Activated CD4-positive, alpha-beta T cell treated with anti-CD3 and anti-CD28 coated beads, Interleukin-2, amount 10 ng/mL, durations not matched to agents 24 days and 14 days (primary cell): ENCODE measurements at regions of chr7 and their contacts with region 1.

Region 1: GRCh38 chr7:106405697-106406141 is 120.9 kb upstream of the NAMPT start:
- DNase-seq: no peak
- H3K4me3 Mint-ChIP-seq: peak overlapping the region; percentile 16
- H3K27ac Mint-ChIP-seq: peak overlapping the region; percentile 49
- H3K4me1 Mint-ChIP-seq: peaks cover 18% of the 10 kb centered on the region
- H3K27me3 Mint-ChIP-seq: peaks cover 3% of the 10 kb centered on the region

Region 2: DNA sequence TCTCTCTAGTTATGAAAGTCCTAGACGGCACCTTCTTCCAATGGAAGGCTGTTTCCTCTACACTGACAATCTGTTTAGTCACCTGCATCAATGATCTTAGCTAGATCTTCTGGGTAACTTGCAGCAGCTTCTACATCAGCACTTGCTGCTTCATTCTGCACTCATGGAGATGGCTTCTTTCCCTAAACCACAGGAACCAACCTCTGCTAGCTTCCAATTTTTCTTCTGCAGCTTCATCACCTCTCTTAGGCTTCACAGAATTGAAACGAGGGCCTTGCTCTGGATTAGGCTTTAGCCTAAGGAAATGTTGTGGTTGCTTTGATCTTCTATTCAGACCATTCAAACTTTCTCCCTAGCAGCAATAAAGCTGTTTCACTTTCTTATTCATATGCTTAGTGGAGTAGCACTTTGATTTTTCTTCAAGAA is 145.6 kb before region 1 on chr7:
- intact Hi-C with region 1: loop called (anchors 1 kb)
- DNase-seq: peak; percentile 73
- H3K4me3 Mint-ChIP-seq: peak overlapping the region; percentile 62
- H3K27ac Mint-ChIP-seq: peak overlapping the region; percentile 78
- H3K4me1 Mint-ChIP-seq: peaks cover 37% of the 10 kb centered on the region
- H3K27me3 Mint-ChIP-seq: no peaks in the 10 kb centered on the region

Region 3: GRCh38 chr7:106367018-106367420 is 38.7 kb before region 1 on chr7:
- intact Hi-C with region 1: loop called (anchors 1 kb)
- DNase-seq: no peak
- H3K4me3 Mint-ChIP-seq: no peak overlapping the region
- H3K27ac Mint-ChIP-seq: peak overlapping the region; percentile 59
- H3K4me1 Mint-ChIP-seq: peaks cover 26% of the 10 kb centered on the region
- H3K27me3 Mint-ChIP-seq: peaks cover 14% of the 10 kb centered on the region

Region 4: DNA sequence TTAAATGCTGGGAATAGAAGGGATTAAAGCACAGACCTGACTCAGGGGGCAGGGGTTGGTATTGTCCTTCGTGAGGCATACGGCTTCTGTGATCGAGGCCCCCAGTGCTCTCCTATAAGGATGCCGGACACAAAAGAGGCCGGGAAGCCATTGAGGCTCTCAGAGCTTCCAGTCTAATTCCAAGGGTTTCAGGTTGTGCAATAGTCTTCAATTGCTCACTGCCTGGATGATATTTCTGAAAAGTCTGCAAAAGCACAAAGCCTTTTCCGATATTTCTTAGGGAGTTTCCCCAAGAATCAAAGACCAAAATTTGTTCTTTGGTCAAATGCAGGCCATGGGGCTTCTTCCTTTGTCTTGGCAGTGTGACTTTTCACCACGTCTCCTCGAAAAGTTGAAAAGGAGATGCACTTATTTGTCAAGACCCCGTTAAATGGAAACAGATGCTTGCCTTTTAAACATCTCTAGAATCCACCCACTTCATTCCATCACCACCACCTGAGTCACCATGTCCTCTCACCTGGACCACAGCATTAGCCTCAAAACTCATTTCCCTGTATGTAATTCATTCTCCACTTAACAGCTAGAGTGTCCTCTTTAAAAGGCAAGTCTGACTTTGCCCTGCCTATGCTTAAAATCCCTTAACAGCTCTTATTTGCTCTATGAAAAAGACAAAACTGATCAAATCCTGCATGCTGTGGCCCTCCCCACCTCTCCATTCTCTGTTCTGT is 13.9 kb after region 1 on chr7:
- intact Hi-C with region 1: loop called (anchors 1 kb)
- DNase-seq: no peak
- H3K4me3 Mint-ChIP-seq: no peak overlapping the region
- H3K27ac Mint-ChIP-seq: peak overlapping the region; percentile 31
- H3K4me1 Mint-ChIP-seq: peaks cover 66% of the 10 kb centered on the region
- H3K27me3 Mint-ChIP-seq: no peaks in the 10 kb centered on the region

Region 5: GRCh38 chr7:106461993-106462859 is 56.5 kb after region 1 on chr7:
- intact Hi-C with region 1: loop called (anchors 1 kb)
- DNase-seq: peak; percentile 76
- H3K4me3 Mint-ChIP-seq: no peak overlapping the region
- H3K27ac Mint-ChIP-seq: no peak overlapping the region
- H3K4me1 Mint-ChIP-seq: peaks cover 19% of the 10 kb centered on the region
- H3K27me3 Mint-ChIP-seq: no peaks in the 10 kb centered on the region

Region 6: GRCh38 chr7:106504645-106505044 is 98.9 kb after region 1 on chr7:
- intact Hi-C with region 1: loop called (anchors 5 kb)
- DNase-seq: no peak
- H3K4me3 Mint-ChIP-seq: peak overlapping the region; percentile 1
- H3K27ac Mint-ChIP-seq: peak overlapping the region; percentile 80
- H3K4me1 Mint-ChIP-seq: peaks cover 14% of the 10 kb centered on the region
- H3K27me3 Mint-ChIP-seq: no peaks in the 10 kb centered on the region

Region 7: GRCh38 chr7:106870983-106871410 is 465.3 kb after region 1 on chr7:
- intact Hi-C with region 1: loop called (anchors 2 kb)
- DNase-seq: peak; percentile 63
- H3K4me3 Mint-ChIP-seq: peak overlapping the region; percentile 36
- H3K27ac Mint-ChIP-seq: peak overlapping the region; percentile 68
- H3K4me1 Mint-ChIP-seq: peaks cover 54% of the 10 kb centered on the region
- H3K27me3 Mint-ChIP-seq: no peaks in the 10 kb centered on the region